ENCODE measurements at regions of chr1 and their contacts with region 1.

Region 1: DNA sequence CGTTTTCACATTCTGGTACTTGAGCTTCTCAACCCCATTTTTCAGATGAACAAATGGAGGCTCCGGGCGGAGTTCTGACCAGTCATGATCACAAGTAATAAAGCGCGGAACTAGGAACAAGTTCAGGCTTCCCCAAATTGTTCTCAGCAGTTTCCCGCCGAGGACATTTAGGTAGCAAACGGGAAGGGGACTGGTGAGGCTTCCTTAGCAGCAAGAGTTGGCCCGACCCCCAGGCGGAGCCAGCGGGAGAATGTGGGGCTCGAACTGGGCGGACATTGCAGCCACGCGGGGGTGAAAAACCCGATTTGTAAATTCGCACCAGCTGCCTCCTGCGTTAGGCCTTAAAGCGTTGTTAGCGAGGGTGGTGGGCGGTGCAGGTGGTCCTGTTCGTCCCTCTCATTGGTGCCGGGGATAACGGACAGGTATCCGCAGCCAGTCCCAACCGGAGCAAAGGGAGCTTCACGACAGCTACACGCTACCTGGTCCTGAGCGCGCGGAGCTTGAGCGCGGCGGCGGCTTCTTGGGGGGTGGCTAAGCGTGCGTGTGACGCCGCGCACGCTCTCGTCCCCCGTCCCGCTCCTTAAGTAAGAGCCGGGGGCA is 15.3 kb downstream of the SEMA6C start:
- DNase-seq: peak; percentile 58 to 88 (median 76)
- ATAC-seq: peak; percentile 100
- H3K4me3 ChIP-seq: peak overlapping the region; percentile 48
- H3K4me3 Mint-ChIP-seq: peak overlapping the region; percentile 86
- H3K27ac ChIP-seq: peak overlapping the region in 1 of 2 donors; percentile 10
- H3K27ac Mint-ChIP-seq: peak overlapping the region; percentile 88
- H3K4me1 ChIP-seq: peaks cover 16% of the 10 kb centered on the region
- H3K4me1 Mint-ChIP-seq: peaks cover 15% of the 10 kb centered on the region
- H3K27me3 ChIP-seq: peaks cover 0 to 9% of the 10 kb centered on the region in 2 experiments
- H3K27me3 Mint-ChIP-seq: no peaks in the 10 kb centered on the region
- CTCF ChIP-seq: no peak

Region 2: DNA sequence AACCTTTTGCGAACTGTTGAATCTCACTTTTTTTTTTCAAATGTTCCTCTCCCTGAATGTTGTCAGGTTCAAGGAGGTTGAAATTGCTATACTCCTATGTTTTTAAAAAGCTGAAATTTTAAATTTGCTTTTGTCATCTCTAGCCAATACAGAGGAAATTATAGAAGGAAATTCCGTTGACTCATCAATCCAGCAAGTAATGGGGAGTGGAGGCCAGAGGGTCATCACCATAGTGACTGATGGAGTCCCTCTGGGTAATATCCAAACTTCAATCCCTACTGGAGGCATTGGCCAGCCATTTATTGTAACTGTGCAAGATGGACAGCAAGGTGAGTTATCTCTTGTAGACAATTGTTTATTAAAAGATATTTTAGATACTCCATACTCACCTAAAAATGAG is 24.2 kb before region 1 on chr1:
- CTCF ChIA-PET with region 1: no interaction called
- POLR2A ChIA-PET with region 1: interaction called, 17 read pairs
- intact Hi-C with region 1: no loop called
- DNase-seq: no peak
- ATAC-seq: no peak
- H3K4me3 ChIP-seq: no peak overlapping the region
- H3K4me3 Mint-ChIP-seq: no peak overlapping the region
- H3K27ac ChIP-seq: no peak overlapping the region
- H3K27ac Mint-ChIP-seq: no peak overlapping the region
- H3K4me1 ChIP-seq: no peaks in the 10 kb centered on the region
- H3K4me1 Mint-ChIP-seq: no peaks in the 10 kb centered on the region
- H3K27me3 ChIP-seq: no peaks in the 10 kb centered on the region
- H3K27me3 Mint-ChIP-seq: no peaks in the 10 kb centered on the region
- CTCF ChIP-seq: no peak

Measured in CD4-positive, alpha-beta T cell (primary cell).